ENCODE measurements at regions of chr3 and their contacts with region 1.

Region 1: GRCh38 chr3:34260271-34261006 is 462.0 kb downstream of the PDCD6IP start:
- DNase-seq: no peak
- H3K4me3 ChIP-seq: no peak overlapping the region
- CTCF ChIP-seq: peak; percentile 58

Region 2: DNA sequence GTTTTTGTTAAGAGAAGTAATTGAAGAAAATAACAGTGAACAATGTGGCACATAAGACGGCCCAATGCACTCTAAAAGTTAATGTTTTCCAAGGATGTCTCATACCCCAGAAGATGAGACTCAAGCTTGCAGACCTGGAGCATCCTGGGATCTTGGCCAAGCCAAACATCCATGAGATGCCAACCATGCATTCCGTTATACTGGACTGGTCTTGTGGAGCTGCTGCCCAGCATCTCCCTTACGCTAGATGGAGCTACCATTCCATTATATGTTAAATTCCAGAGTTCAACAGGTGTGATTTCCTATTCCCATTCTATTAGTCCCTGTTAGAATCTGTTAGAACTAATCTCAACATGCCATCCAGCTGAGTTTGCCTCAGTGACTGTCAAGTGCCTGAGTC is 280.2 kb before region 1 on chr3:
- CTCF ChIA-PET with region 1: interaction called, 15 read pairs
- POLR2A ChIA-PET with region 1: no interaction called
- DNase-seq: peak; percentile 84
- H3K4me3 ChIP-seq: no peak overlapping the region
- CTCF ChIP-seq: peak; percentile 75

Region 3: DNA sequence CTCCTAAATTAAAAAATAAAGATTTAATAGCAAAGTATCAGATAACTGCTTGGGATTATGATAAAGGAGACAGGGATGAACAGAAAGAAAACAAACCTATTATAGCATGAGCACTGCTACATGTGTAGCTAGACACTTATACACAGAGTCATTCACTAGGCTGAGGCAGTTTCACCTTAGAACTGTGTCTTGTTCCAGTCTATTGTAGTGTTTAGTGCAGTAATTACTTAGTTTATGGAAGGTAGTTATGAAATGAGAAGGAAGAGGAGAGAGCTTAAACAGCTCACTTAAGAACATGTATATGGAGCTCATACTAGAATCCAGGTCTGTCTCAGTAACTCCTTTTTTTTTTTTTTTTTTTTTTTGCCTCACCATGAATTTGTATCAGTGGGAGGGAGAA is 20.6 kb before region 1 on chr3:
- CTCF ChIA-PET with region 1: interaction called, 19 read pairs
- POLR2A ChIA-PET with region 1: no interaction called
- DNase-seq: no peak
- H3K4me3 ChIP-seq: no peak overlapping the region
- CTCF ChIP-seq: no peak

Region 4: DNA sequence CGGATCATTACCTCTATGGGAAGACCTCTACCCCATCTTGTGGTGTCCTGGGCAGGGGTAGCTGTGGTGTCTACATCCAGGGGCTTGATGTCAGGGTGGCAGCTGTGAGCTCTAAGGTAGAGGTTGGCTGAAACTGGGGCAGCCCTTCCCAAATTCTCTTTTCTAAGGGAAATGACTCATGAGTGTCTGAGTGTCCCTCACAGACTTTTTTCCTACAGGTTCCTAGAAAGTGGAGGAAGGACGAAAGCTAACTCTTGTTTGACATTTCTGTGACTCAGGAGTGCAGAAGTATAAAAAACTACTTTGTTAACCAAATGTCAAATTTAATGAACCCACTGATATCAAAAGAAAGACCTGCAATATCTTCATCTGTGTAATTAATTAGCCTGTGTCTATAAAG is 19.5 kb after region 1 on chr3:
- CTCF ChIA-PET with region 1: interaction called, 17 read pairs
- POLR2A ChIA-PET with region 1: no interaction called
- DNase-seq: no peak
- H3K4me3 ChIP-seq: no peak overlapping the region
- CTCF ChIP-seq: no peak

Region 5: GRCh38 chr3:34298653-34299052 is 38.2 kb after region 1 on chr3:
- CTCF ChIA-PET with region 1: no interaction called
- POLR2A ChIA-PET with region 1: no interaction called
- DNase-seq: no peak
- H3K4me3 ChIP-seq: no peak overlapping the region
- CTCF ChIP-seq: no peak

Measured in AG04449 (cell line).